A549 (cell line): ENCODE measurements at regions of chr6 and their contacts with region 1.

Region 1: GRCh38 chr6:52995913-52996645 is 995 bp upstream of the GSTA4 start:
- DNase-seq: peak; percentile 13 to 78
- ATAC-seq: peak in 1 of 2 experiments; percentile 1; a peak in 1 of 6 replicates
- H3K4me3 ChIP-seq: peak overlapping the region; percentile 45
- H3K27ac ChIP-seq: peak overlapping the region in 1 of 2 experiments; percentile 59; a peak in 3 of 6 replicates
- H3K4me1 ChIP-seq: peaks cover 6% of the 10 kb centered on the region; the same call in 2 of the 3 replicates
- CTCF ChIP-seq: no peak
- EP300 ChIP-seq: no peak
- POLR2A ChIP-seq: no peak
- RAD21 ChIP-seq: no peak

Region 2: DNA sequence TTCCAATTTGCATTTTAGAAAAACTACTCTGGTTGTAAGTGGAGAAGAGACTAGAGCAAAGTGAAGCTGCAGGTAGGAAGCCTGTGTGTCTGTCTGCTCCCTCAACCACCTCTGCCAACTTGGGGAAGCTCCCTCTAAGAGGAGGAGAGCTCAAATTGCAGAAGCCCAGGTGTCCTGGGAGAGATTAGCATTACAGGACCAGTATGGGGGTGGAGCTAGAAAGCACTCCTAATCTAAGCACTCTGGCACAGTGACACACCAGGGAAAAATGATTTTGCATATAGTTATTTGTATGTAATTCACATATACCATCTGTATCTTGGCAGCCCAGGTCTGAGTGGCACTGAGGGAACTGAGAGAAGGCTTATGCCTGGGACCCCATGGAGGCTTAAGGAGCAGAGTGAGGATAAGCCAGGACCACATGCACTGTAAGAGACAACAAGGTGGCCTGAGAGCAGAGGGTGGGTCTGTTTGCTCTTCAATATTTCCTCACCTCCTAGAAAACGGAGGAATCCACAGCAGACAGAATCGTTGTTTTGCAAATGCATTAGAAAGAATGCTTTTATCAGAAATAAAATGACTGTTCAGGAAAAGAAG is 246.4 kb before region 1 on chr6:
- CTCF ChIA-PET with region 1: no interaction called
- POLR2A ChIA-PET with region 1: no interaction called
- DNase-seq: no peak
- ATAC-seq: no peak
- H3K4me3 ChIP-seq: no peak overlapping the region
- H3K27ac ChIP-seq: no peak overlapping the region
- H3K4me1 ChIP-seq: no peaks in the 10 kb centered on the region
- CTCF ChIP-seq: no peak
- EP300 ChIP-seq: no peak
- POLR2A ChIP-seq: no peak
- RAD21 ChIP-seq: no peak

Region 3: GRCh38 chr6:52958546-52959255 is 37.4 kb before region 1 on chr6:
- CTCF ChIA-PET with region 1: no interaction called
- POLR2A ChIA-PET with region 1: no interaction called
- DNase-seq: no peak
- ATAC-seq: no peak
- H3K4me3 ChIP-seq: no peak overlapping the region
- H3K27ac ChIP-seq: no peak overlapping the region
- H3K4me1 ChIP-seq: no peaks in the 10 kb centered on the region
- CTCF ChIP-seq: no peak
- EP300 ChIP-seq: no peak
- POLR2A ChIP-seq: no peak
- RAD21 ChIP-seq: no peak

Region 4: GRCh38 chr6:52981222-52981900 is 14.7 kb before region 1 on chr6:
- CTCF ChIA-PET with region 1: interaction called, 10 read pairs
- POLR2A ChIA-PET with region 1: no interaction called
- DNase-seq: no peak
- ATAC-seq: no peak
- H3K4me3 ChIP-seq: no peak overlapping the region
- H3K27ac ChIP-seq: no peak overlapping the region
- H3K4me1 ChIP-seq: no peaks in the 10 kb centered on the region
- CTCF ChIP-seq: no peak
- EP300 ChIP-seq: no peak
- POLR2A ChIP-seq: no peak
- RAD21 ChIP-seq: no peak

Region 5: DNA sequence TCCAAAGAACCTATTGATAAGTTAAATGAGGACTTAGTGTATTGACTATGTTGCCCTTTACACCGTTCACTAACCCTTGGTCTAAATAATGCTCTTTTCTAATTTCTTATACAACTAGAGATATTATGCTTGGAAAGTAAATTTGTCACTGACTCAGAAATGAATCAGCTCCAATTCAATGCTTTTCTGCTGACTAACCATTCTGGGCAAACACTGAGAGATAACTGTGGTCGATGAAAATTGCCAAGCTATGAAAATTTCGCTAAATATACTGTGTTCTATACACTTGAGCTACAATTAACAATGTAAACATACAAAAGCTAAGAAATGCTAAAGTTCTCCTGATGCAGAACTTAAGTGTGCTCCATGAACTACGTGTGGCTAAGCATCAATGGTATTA is 46.0 kb after region 1 on chr6:
- CTCF ChIA-PET with region 1: interaction called, 14 read pairs
- POLR2A ChIA-PET with region 1: no interaction called
- DNase-seq: peak; percentile 7 to 16
- ATAC-seq: peak; percentile 50 to 72; a peak in 3 of 6 replicates
- H3K4me3 ChIP-seq: no peak overlapping the region
- H3K27ac ChIP-seq: peak overlapping the region in 1 of 2 experiments; percentile 17; a peak in 1 of 6 replicates
- H3K4me1 ChIP-seq: peaks cover 27% of the 10 kb centered on the region
- CTCF ChIP-seq: no peak
- EP300 ChIP-seq: no peak
- POLR2A ChIP-seq: no peak
- RAD21 ChIP-seq: no peak

Region 6: GRCh38 chr6:53064726-53065215 is 68.7 kb after region 1 on chr6:
- CTCF ChIA-PET with region 1: interaction called, 16 read pairs
- POLR2A ChIA-PET with region 1: interaction called, 4 read pairs
- DNase-seq: peak; percentile 85 to 96
- ATAC-seq: peak; percentile 77 to 85
- H3K4me3 ChIP-seq: peak overlapping the region; percentile 93
- H3K27ac ChIP-seq: peak overlapping the region; percentile 95 to 97
- H3K4me1 ChIP-seq: peaks cover 30% of the 10 kb centered on the region
- CTCF ChIP-seq: no peak
- EP300 ChIP-seq: no peak
- POLR2A ChIP-seq: no peak
- RAD21 ChIP-seq: no peak